ENCODE measurements at regions of chr2 and their contacts with region 1.

Region 1: DNA sequence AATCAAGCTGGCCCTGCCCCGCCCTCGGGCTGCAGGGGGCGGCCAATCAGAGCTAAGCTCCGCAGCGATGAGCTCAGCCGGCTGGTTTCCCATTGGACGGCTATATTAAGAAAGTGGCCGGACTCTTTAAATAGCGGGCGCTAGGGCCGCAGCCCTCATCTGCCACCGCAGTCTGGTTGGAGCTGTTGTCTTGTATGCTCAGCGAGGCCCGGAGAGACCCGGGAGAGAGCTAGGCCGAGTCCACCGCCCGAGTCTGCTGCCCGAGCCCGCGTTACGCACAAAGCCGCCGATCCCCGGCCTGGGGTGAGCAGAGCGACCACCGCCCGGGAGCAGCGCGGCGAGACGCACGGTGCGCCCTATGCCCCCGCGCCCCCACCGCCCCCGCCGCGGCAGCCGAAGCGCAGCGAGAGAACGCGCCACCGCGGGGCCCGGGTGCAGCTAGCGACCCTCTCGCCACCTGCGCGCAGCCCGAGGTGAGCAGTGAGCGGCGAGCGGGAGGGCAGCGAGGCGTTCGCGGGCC is at the start of gene RHOB:
- DNase-seq: peak; percentile 97 to 99 (median 98)
- H3K4me3 ChIP-seq: peak within 1 kb of the TSS; percentile 57 to 93 (median 71)
- H3K27ac ChIP-seq: peak within 1 kb of the TSS in 1 of 2 experiments; percentile 54
- H3K4me1 ChIP-seq: peaks cover 0 to 21% (median 17%) of the 10 kb centered on the region in 4 experiments
- H3K27me3 ChIP-seq: peaks cover 7 to 30% (median 27%) of the 10 kb centered on the region in 5 experiments

Region 2: GRCh38 chr2:20424300-20425290 is 22.4 kb before region 1 on chr2:
- CTCF ChIA-PET with region 1: interaction called, 113 read pairs
- POLR2A ChIA-PET with region 1: interaction called, 11 read pairs
- DNase-seq: peak; percentile 43 to 94 (median 89)
- H3K4me3 ChIP-seq: peak overlapping the region in 4 of 7 experiments; percentile 12 to 44 (median 42)
- H3K27ac ChIP-seq: peak overlapping the region in 1 of 2 experiments; percentile 23
- H3K4me1 ChIP-seq: peaks cover 11 to 44% (median 25%) of the 10 kb centered on the region in 4 experiments
- H3K27me3 ChIP-seq: no peaks in the 10 kb centered on the region

Region 3: GRCh38 chr2:21047141-21048009 is 600.4 kb after region 1 on chr2:
- CTCF ChIA-PET with region 1: no interaction called
- POLR2A ChIA-PET with region 1: no interaction called
- DNase-seq: no peak
- H3K4me3 ChIP-seq: no peak overlapping the region
- H3K27ac ChIP-seq: no peak overlapping the region
- H3K4me1 ChIP-seq: peaks cover 0 to 19% (median 6%) of the 10 kb centered on the region in 4 experiments
- H3K27me3 ChIP-seq: peaks cover 2 to 26% (median 14%) of the 10 kb centered on the region in 5 experiments